CD4-positive, alpha-beta memory T cell (primary cell): ENCODE measurements at regions of chr9 and their contacts with region 1.

Region 1: DNA sequence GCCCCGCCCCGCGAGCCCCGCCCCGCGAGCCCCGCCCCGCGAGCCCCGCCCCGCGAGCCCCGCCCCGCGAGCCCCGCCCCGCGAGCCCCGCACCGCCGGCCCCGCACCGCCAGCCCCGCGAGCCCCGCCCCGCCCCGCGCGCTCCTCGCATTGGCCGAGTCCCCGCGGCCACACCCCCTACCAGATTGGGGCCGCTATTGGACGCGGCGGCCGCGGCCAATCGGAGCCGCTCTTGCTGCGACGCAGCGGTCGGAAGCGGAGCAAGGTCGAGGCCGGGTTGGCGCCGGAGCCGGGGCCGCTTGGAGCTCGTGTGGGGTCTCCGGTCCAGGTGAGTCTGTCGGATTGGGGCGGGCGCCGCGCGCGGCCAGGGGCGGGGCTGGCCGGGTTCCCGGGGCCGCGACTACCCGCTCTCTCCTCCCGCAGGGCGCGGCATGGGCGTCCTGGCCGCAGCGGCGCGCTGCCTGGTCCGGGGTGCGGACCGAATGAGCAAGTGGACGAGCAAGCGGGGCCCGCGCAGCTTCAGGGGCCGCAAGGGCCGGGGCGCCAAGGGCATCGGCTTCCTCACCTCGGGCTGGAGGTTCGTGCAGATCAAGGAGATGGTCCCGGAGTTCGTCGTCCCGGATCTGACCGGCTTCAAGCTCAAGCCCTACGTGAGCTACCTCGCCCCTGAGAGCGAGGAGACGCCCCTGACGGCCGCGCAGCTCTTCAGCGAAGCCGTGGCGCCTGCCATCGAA is at the start of gene MRPL41:
- DNase-seq: peak; percentile 78 to 86 (median 84)
- H3K4me3 ChIP-seq: peak within 1 kb of the TSS; percentile 42 to 80
- H3K4me3 Mint-ChIP-seq: peak within 1 kb of the TSS; percentile 80 to 92 (median 88)
- H3K27ac ChIP-seq: peak within 1 kb of the TSS; percentile 71
- H3K27ac Mint-ChIP-seq: peak within 1 kb of the TSS; percentile 36 to 93 (median 89)
- H3K4me1 ChIP-seq: peaks cover 15% of the 10 kb centered on the region
- H3K4me1 Mint-ChIP-seq: peaks cover 9 to 23% (median 16%) of the 10 kb centered on the region in 4 donors
- H3K27me3 ChIP-seq: no peaks in the 10 kb centered on the region
- H3K27me3 Mint-ChIP-seq: no peaks in the 10 kb centered on the region
- total RNA-seq, gene MRPL41: 91.6 to 95.9 TPM

Region 2: GRCh38 chr9:137423004-137423874 is 128.6 kb before region 1 on chr9 and contains the starts of genes EXD3 and NOXA1:
- CTCF ChIA-PET with region 1: no interaction called
- POLR2A ChIA-PET with region 1: interaction called, 4 read pairs
- intact Hi-C with region 1: loop called (anchors 10 kb)
- DNase-seq: peak; percentile 89 to 93 (median 91)
- H3K4me3 ChIP-seq: peak within 1 kb of the TSS; percentile 57
- H3K4me3 Mint-ChIP-seq: peak within 1 kb of the TSS; percentile 82 to 87 (median 85)
- H3K27ac ChIP-seq: peak within 1 kb of the TSS; percentile 43
- H3K27ac Mint-ChIP-seq: peak within 1 kb of the TSS; percentile 37 to 87 (median 73)
- H3K4me1 ChIP-seq: peaks cover 24% of the 10 kb centered on the region
- H3K4me1 Mint-ChIP-seq: peaks cover 5 to 21% (median 9%) of the 10 kb centered on the region in 4 donors
- H3K27me3 ChIP-seq: no peaks in the 10 kb centered on the region
- H3K27me3 Mint-ChIP-seq: no peaks in the 10 kb centered on the region
- total RNA-seq, gene EXD3: 21.4 to 21.9 TPM
- total RNA-seq, gene NOXA1: 4.5 to 5.6 TPM

Region 3: GRCh38 chr9:137534256-137535117 is 17.3 kb before region 1 on chr9:
- CTCF ChIA-PET with region 1: interaction called, 5 read pairs
- POLR2A ChIA-PET with region 1: interaction called, 4 read pairs
- intact Hi-C with region 1: loop called (anchors 2 kb)
- DNase-seq: peak in 3 of 5 donors; percentile 39 to 40 (median 39)
- H3K4me3 ChIP-seq: no peak overlapping the region
- H3K4me3 Mint-ChIP-seq: peak overlapping the region in 2 of 8 donors; percentile 1 to 2
- H3K27ac ChIP-seq: no peak overlapping the region
- H3K27ac Mint-ChIP-seq: peak overlapping the region in 2 of 7 donors; percentile 48 to 57
- H3K4me1 ChIP-seq: peaks cover 20% of the 10 kb centered on the region
- H3K4me1 Mint-ChIP-seq: peaks cover 17 to 31% (median 22%) of the 10 kb centered on the region in 4 donors
- H3K27me3 ChIP-seq: no peaks in the 10 kb centered on the region
- H3K27me3 Mint-ChIP-seq: no peaks in the 10 kb centered on the region

Region 4: GRCh38 chr9:137578518-137579258 is 26.9 kb after region 1 on chr9 and contains the start of gene DPH7:
- CTCF ChIA-PET with region 1: interaction called, 5 read pairs
- POLR2A ChIA-PET with region 1: interaction called, 38 read pairs
- intact Hi-C with region 1: loop called (anchors 1 kb)
- DNase-seq: peak; percentile 91 to 93 (median 92)
- H3K4me3 ChIP-seq: peak within 1 kb of the TSS; percentile 47 to 86
- H3K4me3 Mint-ChIP-seq: peak within 1 kb of the TSS; percentile 78 to 87 (median 84)
- H3K27ac ChIP-seq: peak within 1 kb of the TSS; percentile 78
- H3K27ac Mint-ChIP-seq: peak within 1 kb of the TSS; percentile 22 to 85 (median 70)
- H3K4me1 ChIP-seq: peaks cover 37% of the 10 kb centered on the region
- H3K4me1 Mint-ChIP-seq: peaks cover 15 to 44% (median 27%) of the 10 kb centered on the region in 4 donors
- H3K27me3 ChIP-seq: no peaks in the 10 kb centered on the region
- H3K27me3 Mint-ChIP-seq: no peaks in the 10 kb centered on the region
- total RNA-seq, gene DPH7: 76.7 to 79.1 TPM

Region 5: DNA sequence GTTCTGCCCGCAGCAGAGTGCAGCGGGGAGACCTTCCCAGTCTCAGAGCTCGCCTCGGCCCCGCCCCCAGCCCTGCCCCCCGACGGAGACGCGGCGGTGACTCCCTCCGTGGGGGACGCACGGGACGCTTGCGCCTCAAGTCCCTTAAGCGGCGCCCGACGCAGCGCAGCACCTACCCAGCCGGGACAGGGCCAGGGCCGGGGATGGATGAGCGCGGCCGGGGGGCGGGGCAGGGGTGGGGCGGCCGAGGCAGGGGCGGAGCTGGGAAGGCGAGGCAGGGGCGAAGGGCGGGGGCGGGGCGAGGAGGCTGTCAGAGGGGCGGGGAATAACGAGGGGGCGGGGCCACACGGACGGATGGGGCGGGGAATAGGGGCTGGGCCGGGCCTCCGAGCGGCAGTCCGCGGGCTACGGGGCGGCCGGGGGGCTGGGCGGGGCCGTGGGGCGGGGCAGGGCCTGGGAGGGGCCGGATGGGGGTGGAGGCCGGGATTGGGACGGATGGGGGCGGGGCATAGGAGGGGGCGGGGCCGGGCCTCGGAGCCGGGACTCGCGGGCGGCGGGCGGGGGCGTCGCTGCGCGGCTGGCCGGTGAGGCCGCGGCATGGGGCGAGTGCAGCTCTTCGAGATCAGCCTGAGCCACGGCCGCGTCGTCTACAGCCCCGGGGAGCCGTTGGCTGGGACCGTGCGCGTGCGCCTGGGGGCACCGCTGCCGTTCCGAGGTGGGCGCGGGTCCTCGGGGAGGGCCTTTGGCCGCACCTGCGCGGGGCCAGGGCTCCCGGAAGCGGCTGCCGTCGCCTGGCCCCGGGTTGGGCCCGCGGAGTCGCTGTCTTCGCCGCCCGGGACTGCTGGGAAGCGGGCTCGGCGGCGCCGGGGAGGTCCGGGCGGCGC is 53.5 kb after region 1 on chr9 and contains the start of gene ARRDC1:
- CTCF ChIA-PET with region 1: no interaction called
- POLR2A ChIA-PET with region 1: interaction called, 3 read pairs
- intact Hi-C with region 1: loop called (anchors 1 kb)
- DNase-seq: peak; percentile 85 to 94 (median 93)
- H3K4me3 ChIP-seq: peak within 1 kb of the TSS in 1 of 2 donors; percentile 63
- H3K4me3 Mint-ChIP-seq: peak within 1 kb of the TSS; percentile 80 to 88 (median 84)
- H3K27ac ChIP-seq: peak within 1 kb of the TSS; percentile 70
- H3K27ac Mint-ChIP-seq: peak within 1 kb of the TSS in 4 of 7 donors; percentile 52 to 75 (median 68)
- H3K4me1 ChIP-seq: peaks cover 15% of the 10 kb centered on the region
- H3K4me1 Mint-ChIP-seq: peaks cover 7 to 37% (median 20%) of the 10 kb centered on the region in 4 donors
- H3K27me3 ChIP-seq: no peaks in the 10 kb centered on the region
- H3K27me3 Mint-ChIP-seq: no peaks in the 10 kb centered on the region
- total RNA-seq, gene ARRDC1: 82.3 to 86.2 TPM

Region 6: GRCh38 chr9:137618105-137619067 is 66.6 kb after region 1 on chr9 and contains the start of gene EHMT1:
- CTCF ChIA-PET with region 1: no interaction called
- POLR2A ChIA-PET with region 1: interaction called, 25 read pairs
- intact Hi-C with region 1: no loop called
- DNase-seq: peak; percentile 84 to 97 (median 94)
- H3K4me3 ChIP-seq: peak within 1 kb of the TSS; percentile 92 to 97
- H3K4me3 Mint-ChIP-seq: peak within 1 kb of the TSS; percentile 88 to 94 (median 91)
- H3K27ac ChIP-seq: peak within 1 kb of the TSS; percentile 88
- H3K27ac Mint-ChIP-seq: peak within 1 kb of the TSS; percentile 90 to 98 (median 96)
- H3K4me1 ChIP-seq: peaks cover 44% of the 10 kb centered on the region
- H3K4me1 Mint-ChIP-seq: peaks cover 26 to 52% (median 38%) of the 10 kb centered on the region in 4 donors
- H3K27me3 ChIP-seq: no peaks in the 10 kb centered on the region
- H3K27me3 Mint-ChIP-seq: no peaks in the 10 kb centered on the region
- total RNA-seq, gene EHMT1: 99.6 to 118 TPM